IMR-90 (cell line): ENCODE measurements at regions of chr12 and their contacts with region 1.

Region 1: DNA sequence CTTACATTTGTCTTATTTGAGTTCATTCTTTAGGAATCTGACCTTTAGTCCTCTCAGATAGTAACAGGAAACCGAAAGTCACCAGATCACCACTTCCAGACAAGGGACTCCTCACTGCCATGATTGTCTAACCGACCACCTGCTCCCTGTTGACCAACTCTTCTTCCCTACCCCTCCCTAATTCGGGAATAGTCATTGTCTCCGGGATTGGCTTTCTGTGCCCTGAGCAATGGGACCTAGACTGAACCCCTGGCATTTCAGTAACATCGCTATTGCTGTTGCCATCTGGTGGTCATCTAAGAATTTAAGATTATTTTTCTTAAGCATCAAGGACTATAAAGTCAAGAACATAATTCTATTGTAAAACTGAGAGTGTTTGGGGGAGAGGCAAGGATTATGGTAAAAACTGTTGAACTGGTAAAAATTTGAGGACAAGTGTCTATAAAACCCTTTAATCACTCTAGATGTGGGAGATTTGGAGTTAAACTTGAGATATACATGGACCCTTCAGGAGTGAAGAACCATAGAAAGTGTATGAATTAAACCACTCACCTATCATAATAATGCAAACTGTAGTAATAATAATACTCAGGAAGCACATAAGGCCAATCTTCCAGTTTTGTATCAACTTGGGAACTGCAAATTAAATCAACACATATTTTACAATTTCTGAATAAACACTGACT is 6.3 kb downstream of the CLEC2A start:
- DNase-seq: peak; percentile 41
- ATAC-seq: peak; percentile 75
- H3K4me3 ChIP-seq: no peak overlapping the region
- H3K27ac ChIP-seq: no peak overlapping the region
- H3K4me1 ChIP-seq: no peaks in the 10 kb centered on the region
- H3K27me3 ChIP-seq: no peaks in the 10 kb centered on the region; the same call in 1 of the 2 replicates
- CTCF ChIP-seq: peak; percentile 55
- POLR2A ChIP-seq: no peak
- RAD21 ChIP-seq: peak; percentile 47

Region 2: DNA sequence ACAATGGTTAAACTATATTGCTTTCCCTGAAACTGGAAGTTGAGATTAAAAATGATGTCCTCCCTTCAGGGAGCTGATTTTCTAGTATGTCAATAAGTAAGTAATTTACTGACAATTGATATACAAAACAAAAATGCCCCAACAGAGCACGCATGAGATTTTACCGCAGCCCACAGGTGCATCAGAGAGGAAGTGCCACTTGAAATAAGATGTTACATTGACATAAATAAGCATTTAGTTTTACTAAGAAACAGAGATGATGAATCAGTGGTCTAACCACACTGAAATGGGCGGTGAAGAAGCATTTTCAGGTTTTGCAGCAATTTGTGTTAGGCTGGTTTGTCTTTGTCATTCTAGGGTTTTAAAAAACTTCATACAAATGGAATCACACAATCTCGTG is 184.1 kb before region 1 on chr12:
- CTCF ChIA-PET with region 1: interaction called, 3 read pairs
- POLR2A ChIA-PET with region 1: no interaction called
- dilution Hi-C with region 1: no loop called
- in situ Hi-C with region 1: loop called (anchors 5 kb)
- intact Hi-C with region 1: no loop called
- DNase-seq: no peak
- ATAC-seq: no peak
- H3K4me3 ChIP-seq: no peak overlapping the region
- H3K27ac ChIP-seq: no peak overlapping the region
- H3K4me1 ChIP-seq: no peaks in the 10 kb centered on the region
- H3K27me3 ChIP-seq: peaks cover 10% of the 10 kb centered on the region
- CTCF ChIP-seq: no peak
- POLR2A ChIP-seq: no peak
- RAD21 ChIP-seq: no peak

Region 3: GRCh38 chr12:9813821-9814809 is 111.7 kb before region 1 on chr12:
- CTCF ChIA-PET with region 1: interaction called, 3 read pairs
- POLR2A ChIA-PET with region 1: no interaction called
- dilution Hi-C with region 1: no loop called
- in situ Hi-C with region 1: loop called (anchors 10 kb)
- intact Hi-C with region 1: loop called (anchors 1 kb)
- DNase-seq: peak; percentile 17
- ATAC-seq: peak; percentile 100
- H3K4me3 ChIP-seq: no peak overlapping the region; the same call in 1 of the 2 replicates
- H3K27ac ChIP-seq: no peak overlapping the region
- H3K4me1 ChIP-seq: no peaks in the 10 kb centered on the region
- H3K27me3 ChIP-seq: peaks cover 11% of the 10 kb centered on the region
- CTCF ChIP-seq: peak; percentile 78
- POLR2A ChIP-seq: no peak
- RAD21 ChIP-seq: peak; percentile 71

Region 4: GRCh38 chr12:9829990-9830389 is 95.9 kb before region 1 on chr12:
- CTCF ChIA-PET with region 1: no interaction called
- POLR2A ChIA-PET with region 1: interaction called, 11 read pairs
- dilution Hi-C with region 1: no loop called
- in situ Hi-C with region 1: no loop called
- intact Hi-C with region 1: no loop called
- DNase-seq: no peak
- ATAC-seq: no peak
- H3K4me3 ChIP-seq: no peak overlapping the region
- H3K27ac ChIP-seq: no peak overlapping the region
- H3K4me1 ChIP-seq: no peaks in the 10 kb centered on the region
- H3K27me3 ChIP-seq: no peaks in the 10 kb centered on the region
- CTCF ChIP-seq: no peak
- POLR2A ChIP-seq: no peak
- RAD21 ChIP-seq: no peak

Region 5: DNA sequence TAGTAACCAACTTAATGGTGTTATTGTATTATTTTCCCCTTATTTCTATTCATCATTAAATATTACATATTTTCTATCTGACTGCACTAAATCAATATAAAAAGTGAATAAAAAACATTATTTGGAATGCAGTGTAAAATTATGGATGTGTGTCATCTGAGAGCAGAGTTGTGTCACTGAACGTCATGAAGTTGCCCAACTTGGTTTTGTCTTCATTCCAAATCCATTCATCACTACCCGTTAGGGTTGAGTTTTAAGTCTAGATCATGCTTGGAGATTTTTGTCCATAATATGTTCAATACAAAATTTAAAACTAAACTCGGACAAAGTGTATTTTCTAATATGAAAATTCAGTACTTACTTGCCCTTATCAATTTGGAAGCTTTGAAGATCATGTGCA is 82.4 kb before region 1 on chr12:
- CTCF ChIA-PET with region 1: no interaction called
- POLR2A ChIA-PET with region 1: no interaction called
- dilution Hi-C with region 1: no loop called
- in situ Hi-C with region 1: no loop called
- intact Hi-C with region 1: no loop called
- DNase-seq: no peak
- ATAC-seq: no peak
- H3K4me3 ChIP-seq: no peak overlapping the region
- H3K27ac ChIP-seq: no peak overlapping the region
- H3K4me1 ChIP-seq: no peaks in the 10 kb centered on the region
- H3K27me3 ChIP-seq: no peaks in the 10 kb centered on the region; the same call in 1 of the 2 replicates
- CTCF ChIP-seq: no peak
- POLR2A ChIP-seq: no peak
- RAD21 ChIP-seq: no peak